T-cell (primary cell): ENCODE measurements at regions of chr15 and their contacts with region 1.

Region 1: DNA sequence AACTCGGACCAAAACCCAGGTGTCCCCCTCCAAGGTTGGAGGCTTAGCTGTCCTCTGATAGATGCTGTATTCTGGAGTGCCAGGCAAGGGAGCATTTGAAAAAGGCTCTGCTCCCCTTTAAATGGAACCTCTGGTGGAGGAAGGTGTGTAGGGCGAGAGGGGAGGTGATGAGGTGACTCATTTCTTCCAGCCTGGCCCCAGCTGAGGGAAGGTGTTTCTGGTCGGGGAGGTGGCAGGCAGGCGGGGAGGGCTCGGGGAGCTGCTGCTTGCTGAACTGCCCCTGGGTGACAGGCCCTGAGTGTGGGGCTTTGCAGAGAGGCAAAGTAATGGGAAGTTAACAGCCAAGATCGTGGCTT is 18.8 kb downstream of the PSTPIP1 start:
- DNase-seq: peak; percentile 54 to 85 (median 70)
- ATAC-seq: peak; percentile 75 to 87 (median 83)
- H3K4me3 ChIP-seq: peak overlapping the region; percentile 32 to 41
- H3K4me3 Mint-ChIP-seq: peak overlapping the region; percentile 68 to 78 (median 76)
- H3K27ac ChIP-seq: peak overlapping the region; percentile 83
- H3K27ac Mint-ChIP-seq: peak overlapping the region; percentile 97 to 98
- H3K4me1 ChIP-seq: peaks cover 34 to 100% of the 10 kb centered on the region in 2 experiments
- H3K4me1 Mint-ChIP-seq: peaks cover 90 to 95% (median 94%) of the 10 kb centered on the region in 3 donors
- H3K27me3 ChIP-seq: no peaks in the 10 kb centered on the region
- H3K27me3 Mint-ChIP-seq: no peaks in the 10 kb centered on the region

Region 2: GRCh38 chr15:76968310-76968709 is 45.4 kb before region 1 on chr15:
- CTCF ChIA-PET with region 1: interaction called in 1 of 2 experiments, 7 read pairs
- POLR2A ChIA-PET with region 1: interaction called in 1 of 2 experiments, 11 read pairs
- DNase-seq: no peak
- ATAC-seq: no peak
- H3K4me3 ChIP-seq: no peak overlapping the region
- H3K4me3 Mint-ChIP-seq: no peak overlapping the region
- H3K27ac ChIP-seq: no peak overlapping the region
- H3K27ac Mint-ChIP-seq: no peak overlapping the region
- H3K4me1 ChIP-seq: peaks cover 0 to under 1% of the 10 kb centered on the region in 2 experiments
- H3K4me1 Mint-ChIP-seq: peaks cover 0 to 4% (median under 1%) of the 10 kb centered on the region in 3 donors
- H3K27me3 ChIP-seq: peaks cover 0 to 13% of the 10 kb centered on the region in 2 experiments
- H3K27me3 Mint-ChIP-seq: peaks cover 6 to 8% of the 10 kb centered on the region in 2 donors

Region 3: GRCh38 chr15:77024271-77025082 is 10.7 kb after region 1 on chr15:
- CTCF ChIA-PET with region 1: interaction called in 1 of 2 experiments, 15 read pairs
- POLR2A ChIA-PET with region 1: no interaction called
- DNase-seq: peak in 32 of 35 experiments; percentile 37 to 77 (median 54)
- ATAC-seq: peak; percentile 33 to 56 (median 46)
- H3K4me3 ChIP-seq: no peak overlapping the region
- H3K4me3 Mint-ChIP-seq: peak overlapping the region in 1 of 3 donors; percentile 19
- H3K27ac ChIP-seq: peak overlapping the region; percentile 76
- H3K27ac Mint-ChIP-seq: peak overlapping the region; percentile 71 to 91
- H3K4me1 ChIP-seq: peaks cover 30 to 62% of the 10 kb centered on the region in 2 experiments
- H3K4me1 Mint-ChIP-seq: peaks cover 46 to 55% (median 49%) of the 10 kb centered on the region in 3 donors
- H3K27me3 ChIP-seq: no peaks in the 10 kb centered on the region
- H3K27me3 Mint-ChIP-seq: no peaks in the 10 kb centered on the region

Region 4: GRCh38 chr15:77187751-77188464 is 174.2 kb after region 1 on chr15:
- CTCF ChIA-PET with region 1: no interaction called
- POLR2A ChIA-PET with region 1: no interaction called
- DNase-seq: peak in 1 of 35 experiments; percentile 33
- ATAC-seq: peak in 3 of 4 experiments; percentile 35 to 49 (median 42)
- H3K4me3 ChIP-seq: no peak overlapping the region
- H3K4me3 Mint-ChIP-seq: no peak overlapping the region
- H3K27ac ChIP-seq: no peak overlapping the region
- H3K27ac Mint-ChIP-seq: peak overlapping the region; percentile 59 to 66
- H3K4me1 ChIP-seq: peaks cover 7 to 14% of the 10 kb centered on the region in 2 experiments
- H3K4me1 Mint-ChIP-seq: peaks cover 18 to 44% (median 26%) of the 10 kb centered on the region in 3 donors
- H3K27me3 ChIP-seq: no peaks in the 10 kb centered on the region
- H3K27me3 Mint-ChIP-seq: no peaks in the 10 kb centered on the region